PC-3 (cell line): ENCODE measurements at regions of chr5 and their contacts with region 1.

Region 1: GRCh38 chr5:18985171-18985758 is 1002.7 kb downstream of the CDH18 start:
- DNase-seq: peak; percentile 67
- ATAC-seq: peak; percentile 74
- H3K4me3 ChIP-seq: no peak overlapping the region
- H3K27ac ChIP-seq: peak overlapping the region; percentile 87
- H3K4me1 ChIP-seq: peaks cover 18% of the 10 kb centered on the region
- H3K27me3 ChIP-seq: no peaks in the 10 kb centered on the region
- CTCF ChIP-seq: no peak

Region 2: GRCh38 chr5:18702821-18703220 is 282.4 kb before region 1 on chr5:
- CTCF ChIA-PET with region 1: no interaction called
- POLR2A ChIA-PET with region 1: no interaction called
- intact Hi-C with region 1: no loop called
- DNase-seq: no peak
- ATAC-seq: no peak
- H3K4me3 ChIP-seq: no peak overlapping the region
- H3K27ac ChIP-seq: no peak overlapping the region
- H3K4me1 ChIP-seq: peaks cover 5% of the 10 kb centered on the region
- H3K27me3 ChIP-seq: no peaks in the 10 kb centered on the region
- CTCF ChIP-seq: no peak

Region 3: GRCh38 chr5:18881615-18882575 is 103.4 kb before region 1 on chr5:
- CTCF ChIA-PET with region 1: no interaction called
- POLR2A ChIA-PET with region 1: no interaction called
- intact Hi-C with region 1: loop called (anchors 10 kb)
- DNase-seq: peak; percentile 90
- ATAC-seq: peak; percentile 85
- H3K4me3 ChIP-seq: peak overlapping the region; percentile 28
- H3K27ac ChIP-seq: peak overlapping the region; percentile 92
- H3K4me1 ChIP-seq: peaks cover 27% of the 10 kb centered on the region
- H3K27me3 ChIP-seq: no peaks in the 10 kb centered on the region
- CTCF ChIP-seq: no peak

Region 4: GRCh38 chr5:18968966-18969365 is 16.3 kb before region 1 on chr5:
- CTCF ChIA-PET with region 1: no interaction called
- POLR2A ChIA-PET with region 1: no interaction called
- intact Hi-C with region 1: loop called (anchors 1 kb)
- DNase-seq: peak; percentile 96
- ATAC-seq: peak; percentile 94
- H3K4me3 ChIP-seq: no peak overlapping the region
- H3K27ac ChIP-seq: peak overlapping the region; percentile 67
- H3K4me1 ChIP-seq: peaks cover 15% of the 10 kb centered on the region
- H3K27me3 ChIP-seq: no peaks in the 10 kb centered on the region
- CTCF ChIP-seq: no peak

Region 5: DNA sequence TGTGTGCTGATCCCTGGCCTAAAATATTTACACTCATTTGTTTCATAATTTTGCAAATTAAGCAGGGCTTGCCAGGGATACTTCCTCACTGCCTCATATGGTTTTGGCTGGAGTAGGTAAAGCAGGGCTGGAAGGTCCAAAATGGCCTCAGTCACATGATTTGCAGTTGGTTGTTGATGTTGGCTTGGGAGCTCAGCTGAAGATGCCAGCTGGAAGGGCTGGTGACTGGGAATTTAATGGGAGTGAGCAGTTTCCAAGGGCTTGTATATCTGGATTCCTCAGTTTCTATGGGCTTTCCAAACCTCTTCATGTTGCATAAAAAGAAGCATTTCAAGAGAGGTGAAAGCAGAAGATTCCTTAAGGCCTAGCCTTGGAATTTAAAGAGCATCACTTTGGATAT is 273.4 kb after region 1 on chr5:
- CTCF ChIA-PET with region 1: no interaction called
- POLR2A ChIA-PET with region 1: no interaction called
- intact Hi-C with region 1: no loop called
- DNase-seq: no peak
- ATAC-seq: no peak
- H3K4me3 ChIP-seq: no peak overlapping the region
- H3K27ac ChIP-seq: no peak overlapping the region
- H3K4me1 ChIP-seq: no peaks in the 10 kb centered on the region
- H3K27me3 ChIP-seq: no peaks in the 10 kb centered on the region
- CTCF ChIP-seq: no peak

Region 6: DNA sequence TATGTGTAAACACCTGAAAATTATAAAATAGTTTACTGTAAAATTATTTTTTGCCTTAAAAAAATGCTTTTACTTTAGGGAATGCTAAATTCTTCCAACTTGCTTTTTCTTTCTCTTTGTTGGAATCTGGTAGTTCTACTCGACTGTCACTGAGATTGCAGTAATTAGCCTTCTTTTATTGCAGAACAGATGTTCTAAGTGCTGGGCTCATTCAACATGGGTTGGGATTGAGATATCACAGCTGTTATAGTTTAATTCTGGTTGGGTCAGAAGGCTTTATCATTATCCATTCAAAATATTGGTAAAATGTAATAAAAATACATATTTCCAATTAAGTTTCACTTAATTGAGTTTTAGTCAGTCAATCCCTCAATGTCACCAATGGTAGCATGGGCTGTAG is 316.0 kb after region 1 on chr5:
- CTCF ChIA-PET with region 1: no interaction called
- POLR2A ChIA-PET with region 1: no interaction called
- intact Hi-C with region 1: no loop called
- DNase-seq: no peak
- ATAC-seq: no peak
- H3K4me3 ChIP-seq: no peak overlapping the region
- H3K27ac ChIP-seq: no peak overlapping the region
- H3K4me1 ChIP-seq: no peaks in the 10 kb centered on the region
- H3K27me3 ChIP-seq: no peaks in the 10 kb centered on the region
- CTCF ChIP-seq: no peak